ENCODE measurements at regions of chr21 and their contacts with region 1.

Region 1: DNA sequence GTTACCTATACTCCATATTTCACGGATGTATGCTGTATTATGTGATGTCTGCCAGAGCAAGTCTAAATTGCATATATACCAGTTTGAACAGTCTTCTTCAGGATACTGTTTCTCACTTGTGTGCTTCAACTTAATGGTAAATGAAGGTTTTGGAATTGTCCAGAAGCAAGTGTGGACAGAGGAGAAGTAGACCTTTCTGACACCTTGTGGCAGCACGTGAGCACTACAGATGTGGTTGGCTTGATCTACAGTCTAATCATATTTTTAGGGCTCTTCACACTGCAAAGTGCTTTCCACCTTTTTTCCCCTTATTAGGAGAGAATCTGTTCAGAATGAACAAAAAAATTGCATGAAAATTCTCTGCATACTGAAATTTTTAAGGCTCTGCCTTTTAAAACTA is 10.9 kb downstream of the MORC3 start:
- DNase-seq: peak; percentile 75
- ATAC-seq: peak; percentile 92
- H3K4me3 ChIP-seq: no peak overlapping the region
- H3K4me3 Mint-ChIP-seq: peak overlapping the region; percentile 37
- H3K27ac ChIP-seq: peak overlapping the region in 1 of 2 donors; percentile 73
- H3K27ac Mint-ChIP-seq: peak overlapping the region; percentile 65
- H3K4me1 ChIP-seq: peaks cover 32 to 40% of the 10 kb centered on the region in 2 donors
- H3K4me1 Mint-ChIP-seq: peaks cover 41% of the 10 kb centered on the region
- H3K27me3 ChIP-seq: no peaks in the 10 kb centered on the region
- H3K27me3 Mint-ChIP-seq: no peaks in the 10 kb centered on the region
- CTCF ChIP-seq: peak; percentile 84

Region 2: DNA sequence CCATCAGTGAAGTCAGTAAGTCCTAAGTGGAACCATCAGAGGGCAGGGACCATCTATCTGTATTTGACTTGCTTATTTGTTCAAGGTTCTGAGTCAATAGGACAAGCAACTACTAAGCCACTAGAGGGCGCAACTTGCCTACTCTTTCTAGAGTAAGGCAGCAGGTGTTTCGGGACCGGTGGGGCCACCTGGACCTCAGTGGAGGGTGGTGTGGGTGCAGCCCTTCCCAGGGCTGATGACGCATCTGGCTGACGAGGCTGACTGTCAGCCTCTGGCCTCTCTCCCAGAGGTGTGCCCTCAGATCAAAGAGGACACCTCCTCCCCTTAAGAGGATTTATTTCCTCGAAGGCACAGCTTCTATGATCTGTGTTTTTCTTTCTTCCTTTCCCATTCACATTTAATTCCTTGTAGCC is 189.4 kb before region 1 on chr21:
- CTCF ChIA-PET with region 1: interaction called, 45 read pairs
- POLR2A ChIA-PET with region 1: no interaction called
- intact Hi-C with region 1: loop called (anchors 1 kb)
- DNase-seq: peak; percentile 93
- ATAC-seq: peak; percentile 95
- H3K4me3 ChIP-seq: no peak overlapping the region
- H3K4me3 Mint-ChIP-seq: no peak overlapping the region
- H3K27ac ChIP-seq: peak overlapping the region in 1 of 2 donors; percentile 18
- H3K27ac Mint-ChIP-seq: no peak overlapping the region
- H3K4me1 ChIP-seq: peaks cover 19 to 29% of the 10 kb centered on the region in 2 donors
- H3K4me1 Mint-ChIP-seq: peaks cover 24% of the 10 kb centered on the region
- H3K27me3 ChIP-seq: no peaks in the 10 kb centered on the region
- H3K27me3 Mint-ChIP-seq: no peaks in the 10 kb centered on the region
- CTCF ChIP-seq: peak; percentile 93

Region 3: DNA sequence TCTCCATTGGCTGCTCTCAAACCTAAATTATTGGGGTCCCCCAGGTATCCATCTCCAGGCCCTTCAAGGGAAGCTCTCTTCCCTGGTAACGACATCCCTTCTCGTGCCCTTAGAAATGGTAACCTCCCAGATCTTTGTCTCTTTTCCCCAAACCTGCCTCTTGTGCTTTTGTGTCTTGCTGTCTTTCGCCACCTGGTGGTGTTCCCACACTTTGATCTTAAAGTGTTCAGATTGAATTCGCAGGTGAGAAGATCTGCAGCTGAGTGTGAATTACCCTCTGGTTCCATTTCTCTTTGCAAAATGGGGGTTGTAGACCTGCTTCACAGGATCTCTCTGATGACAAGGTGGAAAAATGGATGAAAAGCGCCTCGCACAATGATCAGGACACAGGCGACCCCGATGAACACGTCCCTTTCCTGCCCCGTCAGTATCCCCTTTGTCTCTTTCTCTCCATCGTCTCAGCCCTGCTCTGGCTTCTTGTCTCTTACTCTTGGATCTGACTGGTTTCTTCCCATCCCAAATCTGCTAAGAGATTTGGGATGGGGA is 121.2 kb before region 1 on chr21:
- CTCF ChIA-PET with region 1: interaction called, 12 read pairs
- POLR2A ChIA-PET with region 1: no interaction called
- intact Hi-C with region 1: no loop called
- DNase-seq: peak; percentile 50
- ATAC-seq: peak; percentile 31
- H3K4me3 ChIP-seq: no peak overlapping the region
- H3K4me3 Mint-ChIP-seq: no peak overlapping the region
- H3K27ac ChIP-seq: no peak overlapping the region
- H3K27ac Mint-ChIP-seq: no peak overlapping the region
- H3K4me1 ChIP-seq: no peaks in the 10 kb centered on the region
- H3K4me1 Mint-ChIP-seq: no peaks in the 10 kb centered on the region
- H3K27me3 ChIP-seq: no peaks in the 10 kb centered on the region
- H3K27me3 Mint-ChIP-seq: no peaks in the 10 kb centered on the region
- CTCF ChIP-seq: peak; percentile 33

Region 4: GRCh38 chr21:36288651-36289243 is 42.2 kb before region 1 on chr21:
- CTCF ChIA-PET with region 1: interaction called, 12 read pairs
- POLR2A ChIA-PET with region 1: no interaction called
- intact Hi-C with region 1: loop called (anchors 2 kb)
- DNase-seq: no peak
- ATAC-seq: peak; percentile 49
- H3K4me3 ChIP-seq: no peak overlapping the region
- H3K4me3 Mint-ChIP-seq: peak overlapping the region; percentile 76
- H3K27ac ChIP-seq: peak overlapping the region; percentile 43 to 75
- H3K27ac Mint-ChIP-seq: peak overlapping the region; percentile 92
- H3K4me1 ChIP-seq: peaks cover 6 to 15% of the 10 kb centered on the region in 2 donors
- H3K4me1 Mint-ChIP-seq: peaks cover 29% of the 10 kb centered on the region
- H3K27me3 ChIP-seq: no peaks in the 10 kb centered on the region
- H3K27me3 Mint-ChIP-seq: no peaks in the 10 kb centered on the region
- CTCF ChIP-seq: no peak

Region 5: DNA sequence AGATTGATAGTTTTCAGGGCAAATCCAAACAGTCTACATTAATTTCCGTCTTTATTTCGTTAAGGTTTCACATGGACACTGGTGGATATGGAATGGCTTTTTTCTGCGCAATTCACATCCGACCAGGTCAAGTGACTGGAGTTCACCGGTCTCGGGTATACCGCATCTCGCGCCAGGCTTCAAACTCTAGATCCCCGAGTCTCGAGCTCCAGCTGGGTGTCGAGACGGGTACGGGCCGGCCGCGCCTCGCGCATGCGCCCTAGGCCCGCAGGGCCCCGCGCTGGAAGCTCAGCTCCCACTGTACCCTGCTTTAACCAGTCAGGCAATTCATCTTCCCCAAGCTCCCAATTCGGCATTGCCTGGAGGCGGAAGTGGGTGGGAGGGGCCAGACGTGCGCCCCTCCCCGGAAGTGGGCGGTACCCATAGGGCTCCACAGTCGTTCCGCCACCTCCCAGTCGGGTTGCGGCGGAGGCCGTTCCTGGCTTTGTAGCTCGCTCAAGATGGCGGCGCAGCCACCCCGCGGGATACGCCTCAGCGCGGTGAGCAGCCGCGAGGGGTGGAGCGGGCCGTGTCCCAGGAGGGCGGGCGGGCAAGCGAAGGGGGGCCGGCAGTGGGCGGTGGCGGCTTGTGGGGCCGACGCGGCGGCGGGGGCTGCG is 11.0 kb before region 1 on chr21 and contains the start of gene MORC3:
- CTCF ChIA-PET with region 1: interaction called, 11 read pairs
- POLR2A ChIA-PET with region 1: no interaction called
- intact Hi-C with region 1: loop called (anchors 1 kb)
- DNase-seq: peak; percentile 99
- ATAC-seq: peak; percentile 87
- H3K4me3 ChIP-seq: peak within 1 kb of the TSS; percentile 69 to 98 (median 94)
- H3K4me3 Mint-ChIP-seq: peak within 1 kb of the TSS; percentile 97
- H3K27ac ChIP-seq: peak within 1 kb of the TSS; percentile 86 to 92
- H3K27ac Mint-ChIP-seq: peak within 1 kb of the TSS; percentile 98
- H3K4me1 ChIP-seq: peaks cover 30 to 39% of the 10 kb centered on the region in 2 donors
- H3K4me1 Mint-ChIP-seq: peaks cover 54% of the 10 kb centered on the region
- H3K27me3 ChIP-seq: no peaks in the 10 kb centered on the region
- H3K27me3 Mint-ChIP-seq: no peaks in the 10 kb centered on the region
- CTCF ChIP-seq: no peak
- total RNA-seq, gene MORC3: 104 and 113 TPM in 2 replicates

Measured in B cell (primary cell).